ENCODE measurements at regions of chr11 and their contacts with region 1.

Region 1: DNA sequence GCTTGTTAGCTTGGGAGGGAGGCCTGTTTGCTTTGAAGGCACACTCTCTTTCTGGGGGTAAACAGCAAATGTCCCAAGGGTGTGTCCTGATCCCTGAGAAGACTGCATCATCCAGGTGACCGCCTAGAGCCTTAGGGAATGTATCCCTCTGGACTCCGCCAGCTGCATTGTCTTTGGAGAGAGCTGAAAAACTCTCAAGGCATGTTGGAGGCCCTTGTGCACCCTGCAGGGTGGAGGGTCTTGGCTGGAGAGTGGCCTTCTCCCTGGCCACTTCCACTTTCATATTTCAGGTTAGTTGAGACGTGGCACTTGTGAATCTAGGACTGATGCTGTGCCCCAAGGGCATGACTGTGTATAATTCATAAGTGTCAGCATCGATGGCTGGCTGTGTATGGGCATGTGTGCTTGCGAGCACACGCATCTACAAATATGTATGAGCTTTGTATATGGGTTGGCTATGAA is 70.6 kb downstream of the ZBTB16 start:
- DNase-seq: no peak
- H3K4me3 ChIP-seq: peak overlapping the region in 1 of 2 donors; percentile 36
- H3K27ac ChIP-seq: peak overlapping the region; percentile 92 to 99
- H3K4me1 ChIP-seq: peaks cover 78 to 92% of the 10 kb centered on the region in 2 donors
- H3K27me3 ChIP-seq: no peaks in the 10 kb centered on the region
- CTCF ChIP-seq: no peak

Region 2: DNA sequence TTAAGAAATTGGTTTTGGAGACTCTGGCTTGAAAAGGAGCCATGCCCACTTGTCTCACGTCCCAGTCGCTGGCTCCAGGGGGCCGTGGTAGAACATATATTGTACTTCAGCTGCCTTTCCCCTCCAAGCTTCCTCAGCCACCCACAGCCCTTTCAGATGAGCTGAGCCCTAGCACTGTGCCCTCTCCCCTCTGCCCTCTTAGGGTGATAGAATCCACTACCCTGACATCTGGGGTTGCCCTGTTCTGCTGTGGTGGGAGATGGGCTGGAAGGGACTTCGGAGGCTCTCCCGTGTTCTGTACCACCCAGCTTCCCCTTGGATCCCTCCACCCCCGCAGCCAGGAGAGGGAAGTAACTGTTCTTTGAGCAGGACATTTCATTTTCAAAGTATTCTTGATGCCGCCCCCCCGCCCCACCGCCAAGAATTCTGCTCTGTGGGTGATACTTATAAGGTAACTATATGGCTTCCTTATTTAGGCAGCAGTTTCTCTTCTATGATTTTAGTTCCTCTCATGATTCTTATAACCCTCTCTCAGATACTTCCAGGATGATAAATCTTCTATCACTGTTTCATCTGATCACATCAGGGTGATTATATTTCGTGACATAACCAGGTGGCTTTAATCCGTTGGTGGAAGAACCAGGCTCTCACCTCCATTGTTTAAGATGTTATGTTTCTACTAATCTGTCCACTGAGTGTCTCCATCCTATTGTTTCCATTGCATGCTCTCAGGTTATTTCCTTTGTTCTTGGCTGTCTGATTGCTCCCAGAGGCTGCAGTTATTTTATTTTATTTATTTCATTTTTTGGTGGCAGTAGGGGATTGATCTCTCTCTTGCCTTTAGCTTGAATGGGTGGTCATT is 46.5 kb before region 1 on chr11:
- intact Hi-C with region 1: loop called (anchors 1 kb)
- DNase-seq: no peak
- H3K4me3 ChIP-seq: peak overlapping the region; percentile 6 to 60
- H3K27ac ChIP-seq: peak overlapping the region; percentile 89 to 93
- H3K4me1 ChIP-seq: peaks cover 73 to 90% of the 10 kb centered on the region in 2 donors
- H3K27me3 ChIP-seq: no peaks in the 10 kb centered on the region
- CTCF ChIP-seq: no peak

Region 3: DNA sequence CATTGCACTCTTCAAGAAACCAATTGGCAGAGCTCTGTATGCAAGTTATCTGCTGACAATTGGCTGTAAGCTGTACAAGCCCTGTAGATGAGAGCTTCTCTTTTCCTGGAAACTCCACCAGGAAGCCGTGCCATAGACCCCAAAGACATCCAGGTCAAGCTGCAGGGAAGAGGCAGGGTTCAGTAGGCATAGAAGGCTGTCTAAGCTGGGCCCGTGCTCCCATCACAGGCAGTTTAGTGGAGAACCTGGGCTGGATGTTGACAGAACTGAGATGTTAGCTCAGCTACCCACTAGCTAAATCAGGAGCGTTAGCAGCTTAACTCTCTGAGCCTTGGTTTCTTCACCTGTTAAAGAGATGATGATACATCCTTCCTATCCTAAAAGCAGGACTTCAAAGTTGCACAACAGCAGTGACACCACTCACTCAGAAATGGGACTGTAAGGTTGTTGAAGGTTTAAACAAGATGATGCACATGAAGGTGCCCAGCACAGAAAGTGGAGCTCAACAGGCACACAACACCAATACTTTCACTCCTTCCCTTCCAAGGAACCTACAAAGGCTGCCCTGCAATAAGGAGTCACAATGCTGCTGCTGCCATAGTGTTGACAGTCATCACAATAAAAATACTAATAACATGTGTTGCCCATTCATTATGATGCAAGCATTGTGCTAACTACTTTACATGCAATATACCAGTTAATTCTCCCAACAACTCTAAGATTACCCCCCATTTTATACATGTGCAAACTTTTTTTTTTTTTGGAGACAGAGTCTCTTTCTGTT is 44.8 kb after region 1 on chr11:
- intact Hi-C with region 1: no loop called
- DNase-seq: no peak
- H3K4me3 ChIP-seq: no peak overlapping the region
- H3K27ac ChIP-seq: peak overlapping the region; percentile 92 to 99
- H3K4me1 ChIP-seq: peaks cover 61 to 94% of the 10 kb centered on the region in 2 donors
- H3K27me3 ChIP-seq: no peaks in the 10 kb centered on the region
- CTCF ChIP-seq: no peak

Region 4: DNA sequence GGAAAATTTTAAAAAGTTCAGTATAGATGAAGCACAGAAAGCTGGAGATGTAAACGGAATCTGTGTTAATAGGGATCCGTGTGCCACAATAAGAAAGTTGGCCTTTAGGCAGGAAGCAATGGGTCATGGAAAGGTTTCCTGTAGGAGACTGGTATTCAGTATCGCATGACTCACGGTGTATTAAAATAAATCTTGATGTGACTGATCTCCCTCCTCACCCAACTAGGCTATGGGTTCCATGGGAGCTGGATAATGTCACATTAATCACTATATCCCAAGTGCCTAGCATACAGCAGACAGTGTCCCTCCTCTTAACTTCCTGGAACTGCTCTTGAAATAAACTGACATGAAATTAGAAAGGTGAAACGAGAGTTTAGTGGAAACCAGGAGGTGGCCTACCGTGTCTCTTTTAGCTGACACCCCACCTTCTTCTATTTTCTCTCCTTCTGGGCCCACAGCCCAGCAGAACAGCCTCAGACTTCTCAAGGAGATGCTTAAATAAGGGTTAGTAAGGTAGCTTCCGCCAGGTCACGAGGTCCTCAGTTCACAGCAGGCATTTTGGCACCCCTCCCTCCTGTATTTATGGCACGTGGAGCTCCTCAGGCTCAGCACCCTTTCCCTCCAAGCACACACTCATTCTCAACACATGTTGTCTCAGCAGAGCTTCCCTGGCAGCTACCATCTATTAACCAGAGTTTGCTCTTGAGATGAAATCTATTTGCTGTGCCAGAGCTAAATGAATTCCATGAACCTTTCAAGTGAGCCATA is 667.0 kb after region 1 on chr11:
- intact Hi-C with region 1: no loop called
- DNase-seq: no peak
- H3K4me3 ChIP-seq: no peak overlapping the region
- H3K27ac ChIP-seq: peak overlapping the region in 1 of 2 donors; percentile 2
- H3K4me1 ChIP-seq: no peaks in the 10 kb centered on the region
- H3K27me3 ChIP-seq: no peaks in the 10 kb centered on the region
- CTCF ChIP-seq: no peak

Measured in ascending aorta (tissue), 2 donors.